Head of caudate nucleus (tissue), 42 donors: ENCODE measurements at regions of chr16 and their contacts with region 1.

Region 1: GRCh38 chr16:56866943-56867830 is 2.2 kb downstream of the SLC12A3 start:
- DNase-seq: peak in 21 of 42 donors; percentile 25 to 81 (median 54)

Region 2: GRCh38 chr16:56931892-56932720 is 64.9 kb after region 1 on chr16 and contains the start of gene HERPUD1:
- intact Hi-C with region 1: loop called (anchors 10 kb)
- DNase-seq: peak; percentile 99 to 100 (median 100)